Activated CD4-positive, alpha-beta memory T cell treated with anti-CD3 and anti-CD28 coated beads for 36 hours (primary cell): ENCODE measurements at regions of chr16 and their contacts with region 1.

Region 1: DNA sequence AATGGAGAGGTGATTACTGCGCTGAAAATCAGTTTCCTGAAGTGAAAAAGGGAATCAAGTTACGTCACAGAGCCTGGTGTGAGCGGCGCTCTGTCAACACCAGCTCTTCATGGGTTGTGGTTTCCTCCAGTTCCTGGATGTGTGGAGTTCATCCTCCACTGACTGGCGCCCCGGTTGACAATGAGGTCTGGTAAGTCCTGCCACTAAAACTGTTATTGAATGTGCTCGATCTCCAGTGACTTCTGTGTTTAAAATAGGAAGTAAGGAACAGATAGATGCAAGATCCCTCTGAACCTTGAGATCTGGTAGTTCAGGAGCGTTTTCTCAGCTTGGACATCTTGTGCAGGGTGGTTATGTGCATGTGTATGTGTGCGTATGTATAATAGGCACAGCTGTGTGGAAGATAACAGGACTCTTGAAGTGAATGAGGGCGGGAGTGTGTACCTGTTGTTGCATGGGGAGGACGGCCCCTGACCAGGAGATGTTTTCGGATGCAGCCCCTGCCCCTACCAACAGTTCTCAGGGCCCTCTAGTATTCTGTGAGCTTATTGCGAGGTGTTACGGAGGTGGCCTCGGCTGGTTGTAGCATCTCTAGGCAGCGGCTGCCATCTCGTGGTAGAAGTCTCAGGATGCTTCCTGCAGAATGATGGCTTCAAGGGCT is 22.0 kb upstream of the GOT2 start:
- DNase-seq: peak; percentile 88
- H3K4me3 Mint-ChIP-seq: no peak overlapping the region
- H3K27ac Mint-ChIP-seq: peak overlapping the region; percentile 1
- H3K4me1 Mint-ChIP-seq: peaks cover 8% of the 10 kb centered on the region
- H3K27me3 Mint-ChIP-seq: no peaks in the 10 kb centered on the region

Region 2: DNA sequence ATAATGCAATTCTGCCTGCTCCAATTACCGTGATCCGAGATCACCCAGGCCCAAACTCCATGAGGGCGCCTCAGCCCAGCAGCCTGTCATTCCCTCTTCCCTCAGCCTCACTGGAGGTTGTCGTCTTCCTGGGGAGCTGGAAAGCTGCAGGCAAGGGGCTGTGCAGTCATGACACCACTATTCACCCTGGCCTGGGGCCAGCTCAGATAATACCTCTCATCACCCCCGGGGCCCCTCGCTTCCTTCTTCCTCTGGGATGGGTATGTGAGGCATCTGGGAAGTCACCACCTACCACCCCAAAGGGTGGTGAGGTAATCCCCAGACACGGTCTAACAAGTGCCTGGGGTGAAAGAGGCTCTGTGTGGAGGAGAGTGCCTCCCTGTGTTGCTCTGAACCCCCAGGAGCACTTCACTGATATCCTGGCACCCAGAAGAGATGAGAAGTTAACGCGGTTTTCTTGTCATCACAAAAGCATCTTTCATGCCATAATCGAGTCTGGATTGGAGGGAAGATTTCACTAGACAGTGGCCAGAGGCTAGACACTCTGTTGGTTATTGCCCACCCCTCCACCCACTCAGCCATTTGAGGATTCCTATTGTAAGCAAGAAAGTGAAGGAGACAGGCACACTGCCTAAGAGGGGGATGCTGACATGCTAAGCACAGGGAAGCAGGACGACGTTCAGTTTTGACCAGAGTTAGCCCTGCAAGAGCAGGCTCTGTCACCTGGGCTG is 645.4 kb before region 1 on chr16:
- CTCF ChIA-PET with region 1: no interaction called
- POLR2A ChIA-PET with region 1: no interaction called
- intact Hi-C with region 1: no loop called
- DNase-seq: no peak
- H3K4me3 Mint-ChIP-seq: no peak overlapping the region
- H3K27ac Mint-ChIP-seq: no peak overlapping the region
- H3K4me1 Mint-ChIP-seq: no peaks in the 10 kb centered on the region
- H3K27me3 Mint-ChIP-seq: no peaks in the 10 kb centered on the region

Region 3: GRCh38 chr16:58487566-58488351 is 268.4 kb before region 1 on chr16:
- CTCF ChIA-PET with region 1: interaction called, 22 read pairs
- POLR2A ChIA-PET with region 1: no interaction called
- intact Hi-C with region 1: no loop called
- DNase-seq: peak; percentile 78
- H3K4me3 Mint-ChIP-seq: no peak overlapping the region
- H3K27ac Mint-ChIP-seq: no peak overlapping the region
- H3K4me1 Mint-ChIP-seq: no peaks in the 10 kb centered on the region
- H3K27me3 Mint-ChIP-seq: peaks cover 2% of the 10 kb centered on the region

Region 4: GRCh38 chr16:58494981-58495520 is 261.1 kb before region 1 on chr16:
- CTCF ChIA-PET with region 1: interaction called, 9 read pairs
- POLR2A ChIA-PET with region 1: no interaction called
- intact Hi-C with region 1: loop called (anchors 5 kb)
- DNase-seq: peak; percentile 85
- H3K4me3 Mint-ChIP-seq: no peak overlapping the region
- H3K27ac Mint-ChIP-seq: no peak overlapping the region
- H3K4me1 Mint-ChIP-seq: peaks cover 15% of the 10 kb centered on the region
- H3K27me3 Mint-ChIP-seq: peaks cover 1% of the 10 kb centered on the region

Region 5: DNA sequence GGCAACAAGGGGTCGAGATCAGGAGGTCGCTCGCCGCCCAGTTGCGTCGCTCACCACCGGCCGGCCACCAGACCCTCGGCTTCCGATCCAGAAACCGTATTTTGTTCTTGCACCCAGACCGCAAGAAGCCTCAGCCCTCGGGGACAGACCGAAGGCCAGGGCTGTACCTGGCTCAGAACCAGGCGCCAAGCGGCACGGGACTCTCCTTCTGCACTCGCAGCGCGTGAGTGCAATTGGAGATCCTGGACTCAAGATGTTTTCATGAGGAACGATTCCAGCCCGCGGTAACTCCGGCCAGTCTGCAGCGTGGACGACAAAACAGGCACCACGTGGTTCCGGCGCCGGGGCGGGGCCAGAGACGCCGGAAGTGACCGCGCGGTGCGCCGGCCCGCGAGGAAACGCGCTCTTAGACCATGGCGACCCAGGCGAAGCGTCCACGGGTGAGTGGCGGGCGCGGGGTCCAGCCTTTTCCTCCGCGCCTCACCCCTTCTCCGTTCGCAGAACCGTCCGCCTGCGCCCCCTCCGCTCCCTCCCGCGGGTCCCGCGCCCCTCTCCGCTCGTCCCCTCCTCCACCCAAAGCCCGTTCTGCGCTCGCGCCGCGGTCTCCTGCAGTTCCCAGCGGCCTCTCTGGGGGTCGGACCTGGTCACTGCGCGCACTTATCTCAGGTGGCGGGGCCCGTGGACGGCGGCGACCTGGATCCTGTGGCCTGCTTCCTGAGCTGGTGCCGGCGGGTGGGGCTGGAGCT is 240.8 kb before region 1 on chr16 and contains the start of gene SETD6:
- CTCF ChIA-PET with region 1: interaction called, 96 read pairs
- POLR2A ChIA-PET with region 1: interaction called, 3 read pairs
- intact Hi-C with region 1: loop called (anchors 1 kb)
- DNase-seq: peak; percentile 85
- H3K4me3 Mint-ChIP-seq: peak within 1 kb of the TSS; percentile 89
- H3K27ac Mint-ChIP-seq: peak within 1 kb of the TSS; percentile 76
- H3K4me1 Mint-ChIP-seq: peaks cover 45% of the 10 kb centered on the region
- H3K27me3 Mint-ChIP-seq: no peaks in the 10 kb centered on the region
- total RNA-seq, gene SETD6: 12.9 to 14.5 TPM

Region 6: GRCh38 chr16:58678716-58679115 is 77.4 kb before region 1 on chr16:
- CTCF ChIA-PET with region 1: interaction called, 22 read pairs
- POLR2A ChIA-PET with region 1: no interaction called
- intact Hi-C with region 1: no loop called
- DNase-seq: peak; percentile 27
- H3K4me3 Mint-ChIP-seq: no peak overlapping the region
- H3K27ac Mint-ChIP-seq: no peak overlapping the region
- H3K4me1 Mint-ChIP-seq: peaks cover 6% of the 10 kb centered on the region
- H3K27me3 Mint-ChIP-seq: no peaks in the 10 kb centered on the region

Region 7: DNA sequence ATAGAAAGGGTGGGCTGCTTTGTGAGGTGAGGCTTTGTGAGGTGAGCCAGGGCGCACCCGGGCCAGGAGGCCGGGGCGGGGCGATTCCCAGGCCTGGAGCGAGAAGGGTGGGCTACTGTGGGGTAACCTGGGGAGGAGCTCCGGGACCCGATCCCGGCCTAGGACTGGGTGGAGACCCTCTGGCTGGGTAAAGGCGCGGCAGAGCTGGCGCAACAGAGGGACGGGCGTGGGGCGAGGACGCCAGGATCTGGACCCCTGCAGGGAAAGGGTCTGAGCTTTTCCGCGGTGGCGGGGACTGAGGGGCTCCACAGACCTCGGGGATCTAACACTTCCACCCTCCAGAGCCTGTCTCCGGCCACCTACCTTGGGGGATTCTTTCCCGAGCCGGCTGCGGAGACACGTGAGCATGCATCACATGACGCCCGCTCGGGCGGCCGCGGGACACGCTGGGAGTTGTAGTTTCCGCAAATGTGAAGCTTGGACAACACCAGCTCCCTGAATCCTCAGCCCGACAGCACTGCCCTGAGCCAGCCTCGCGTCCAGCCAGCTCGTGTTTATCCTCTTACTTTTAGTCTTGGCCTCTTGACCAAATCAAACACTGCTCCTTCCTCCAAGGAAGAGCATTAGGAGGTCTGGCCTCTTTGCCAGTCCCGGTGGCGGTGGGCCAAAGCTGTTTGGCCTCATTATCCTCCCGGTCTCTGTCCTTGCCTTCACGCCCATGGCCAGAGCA is 71.6 kb before region 1 on chr16 and contains the start of gene SLC38A7:
- CTCF ChIA-PET with region 1: interaction called, 22 read pairs
- POLR2A ChIA-PET with region 1: no interaction called
- intact Hi-C with region 1: loop called (anchors 1 kb)
- DNase-seq: peak; percentile 83
- H3K4me3 Mint-ChIP-seq: peak within 1 kb of the TSS; percentile 91
- H3K27ac Mint-ChIP-seq: no peak within 1 kb of the TSS
- H3K4me1 Mint-ChIP-seq: peaks cover 15% of the 10 kb centered on the region
- H3K27me3 Mint-ChIP-seq: no peaks in the 10 kb centered on the region
- total RNA-seq, gene SLC38A7: 5.0 to 5.4 TPM

Region 8: GRCh38 chr16:58733671-58734458 is 22.3 kb before region 1 on chr16 and contains the start of gene GOT2:
- CTCF ChIA-PET with region 1: interaction called, 27 read pairs
- POLR2A ChIA-PET with region 1: interaction called, 6 read pairs
- intact Hi-C with region 1: loop called (anchors 1 kb)
- DNase-seq: peak; percentile 88
- H3K4me3 Mint-ChIP-seq: peak within 1 kb of the TSS; percentile 98
- H3K27ac Mint-ChIP-seq: peak within 1 kb of the TSS; percentile 88
- H3K4me1 Mint-ChIP-seq: peaks cover 38% of the 10 kb centered on the region
- H3K27me3 Mint-ChIP-seq: no peaks in the 10 kb centered on the region
- total RNA-seq, gene GOT2: 125 to 127 TPM